Endothelial cell of umbilical vein (primary cell): ENCODE measurements at regions of chr3 and their contacts with region 1.

Region 1: GRCh38 chr3:113531826-113532697 is at the start of gene SIDT1:
- DNase-seq: peak; percentile 21
- H3K4me3 ChIP-seq: peak within 1 kb of the TSS; percentile 41 to 65 (median 45)
- H3K27ac ChIP-seq: no peak within 1 kb of the TSS
- H3K4me1 ChIP-seq: peaks cover 17% of the 10 kb centered on the region
- H3K27me3 ChIP-seq: peaks cover 49 to 72% of the 10 kb centered on the region in 2 experiments
- CTCF ChIP-seq: no peak
- POLR2A ChIP-seq: no peak
- total RNA-seq, gene SIDT1: not detected in 2 replicates

Region 2: GRCh38 chr3:113514265-113514769 is 17.7 kb before region 1 on chr3:
- CTCF ChIA-PET with region 1: interaction called, 6 read pairs
- POLR2A ChIA-PET with region 1: no interaction called
- dilution Hi-C with region 1: no loop called
- intact Hi-C with region 1: loop called (anchors 1 kb)
- DNase-seq: no peak
- H3K4me3 ChIP-seq: peak overlapping the region; percentile 69 to 88 (median 86)
- H3K27ac ChIP-seq: peak overlapping the region; percentile 75
- H3K4me1 ChIP-seq: peaks cover 9% of the 10 kb centered on the region
- H3K27me3 ChIP-seq: peaks cover 11 to 27% of the 10 kb centered on the region in 2 experiments
- CTCF ChIP-seq: no peak
- POLR2A ChIP-seq: no peak

Region 3: GRCh38 chr3:113838631-113839209 is 306.7 kb after region 1 on chr3 and contains the start of gene GRAMD1C:
- CTCF ChIA-PET with region 1: no interaction called
- POLR2A ChIA-PET with region 1: no interaction called
- dilution Hi-C with region 1: no loop called
- intact Hi-C with region 1: no loop called
- DNase-seq: peak; percentile 91
- H3K4me3 ChIP-seq: peak within 1 kb of the TSS; percentile 67 to 80 (median 69)
- H3K27ac ChIP-seq: peak within 1 kb of the TSS; percentile 83
- H3K4me1 ChIP-seq: no peaks in the 10 kb centered on the region
- H3K27me3 ChIP-seq: no peaks in the 10 kb centered on the region
- CTCF ChIP-seq: peak; percentile 85 to 93
- POLR2A ChIP-seq: peak; percentile 61
- total RNA-seq, gene GRAMD1C: 17.0 and 24.0 TPM in 2 replicates

Region 4: GRCh38 chr3:113954091-113954685 is 422.1 kb after region 1 on chr3:
- CTCF ChIA-PET with region 1: no interaction called
- POLR2A ChIA-PET with region 1: no interaction called
- dilution Hi-C with region 1: no loop called
- intact Hi-C with region 1: no loop called
- DNase-seq: no peak
- H3K4me3 ChIP-seq: no peak overlapping the region
- H3K27ac ChIP-seq: no peak overlapping the region
- H3K4me1 ChIP-seq: peaks cover 14% of the 10 kb centered on the region
- H3K27me3 ChIP-seq: no peaks in the 10 kb centered on the region
- CTCF ChIP-seq: no peak
- POLR2A ChIP-seq: no peak